HepG2 (cell line): ENCODE measurements at regions of chr5 and their contacts with region 1.

Region 1: GRCh38 chr5:54249210-54250028 is 61.0 kb downstream of the ARL15 start:
- DNase-seq: no peak
- ATAC-seq: no peak
- H3K4me3 ChIP-seq: no peak overlapping the region
- H3K27ac ChIP-seq: no peak overlapping the region
- H3K4me1 ChIP-seq: no peaks in the 10 kb centered on the region
- H3K27me3 ChIP-seq: no peaks in the 10 kb centered on the region
- CTCF ChIP-seq: no peak
- EP300 ChIP-seq: no peak
- POLR2A ChIP-seq: no peak
- RAD21 ChIP-seq: no peak

Region 2: GRCh38 chr5:54263447-54263846 is 14.0 kb after region 1 on chr5:
- CTCF ChIA-PET with region 1: no interaction called
- POLR2A ChIA-PET with region 1: no interaction called
- in situ Hi-C with region 1: no loop called
- intact Hi-C with region 1: no loop called
- DNase-seq: no peak
- ATAC-seq: no peak
- H3K4me3 ChIP-seq: no peak overlapping the region
- H3K27ac ChIP-seq: no peak overlapping the region
- H3K4me1 ChIP-seq: no peaks in the 10 kb centered on the region
- H3K27me3 ChIP-seq: no peaks in the 10 kb centered on the region
- CTCF ChIP-seq: no peak
- EP300 ChIP-seq: no peak
- POLR2A ChIP-seq: no peak
- RAD21 ChIP-seq: no peak

Region 3: GRCh38 chr5:54310433-54311175 is 61.2 kb after region 1 on chr5 and contains the start of gene ARL15:
- CTCF ChIA-PET with region 1: no interaction called
- POLR2A ChIA-PET with region 1: no interaction called
- in situ Hi-C with region 1: no loop called
- intact Hi-C with region 1: loop called (anchors 5 kb)
- DNase-seq: peak; percentile 91
- ATAC-seq: peak; percentile 93
- H3K4me3 ChIP-seq: peak within 1 kb of the TSS; percentile 91 to 97 (median 92)
- H3K27ac ChIP-seq: peak within 1 kb of the TSS; percentile 43
- H3K4me1 ChIP-seq: peaks cover 42% of the 10 kb centered on the region
- H3K27me3 ChIP-seq: no peaks in the 10 kb centered on the region; a peak in 2 of 5 replicates
- CTCF ChIP-seq: 0 out of 2 replicates have a peak, but pooled peaks have one; percentile 9
- EP300 ChIP-seq: no peak; a peak in 1 of 4 replicates
- POLR2A ChIP-seq: peak; percentile 97 to 98
- RAD21 ChIP-seq: no peak
- total RNA-seq, gene ARL15: 7.7 and 11.5 TPM in 2 replicates

Region 4: GRCh38 chr5:54325610-54326311 is 76.3 kb after region 1 on chr5:
- CTCF ChIA-PET with region 1: no interaction called
- POLR2A ChIA-PET with region 1: no interaction called
- in situ Hi-C with region 1: no loop called
- intact Hi-C with region 1: no loop called
- DNase-seq: no peak
- ATAC-seq: no peak
- H3K4me3 ChIP-seq: no peak overlapping the region
- H3K27ac ChIP-seq: no peak overlapping the region
- H3K4me1 ChIP-seq: no peaks in the 10 kb centered on the region
- H3K27me3 ChIP-seq: no peaks in the 10 kb centered on the region
- CTCF ChIP-seq: no peak
- EP300 ChIP-seq: no peak
- POLR2A ChIP-seq: no peak
- RAD21 ChIP-seq: no peak